Tibial artery (tissue), 4 donors: ENCODE measurements at regions of chr5 and their contacts with region 1.

Region 1: DNA sequence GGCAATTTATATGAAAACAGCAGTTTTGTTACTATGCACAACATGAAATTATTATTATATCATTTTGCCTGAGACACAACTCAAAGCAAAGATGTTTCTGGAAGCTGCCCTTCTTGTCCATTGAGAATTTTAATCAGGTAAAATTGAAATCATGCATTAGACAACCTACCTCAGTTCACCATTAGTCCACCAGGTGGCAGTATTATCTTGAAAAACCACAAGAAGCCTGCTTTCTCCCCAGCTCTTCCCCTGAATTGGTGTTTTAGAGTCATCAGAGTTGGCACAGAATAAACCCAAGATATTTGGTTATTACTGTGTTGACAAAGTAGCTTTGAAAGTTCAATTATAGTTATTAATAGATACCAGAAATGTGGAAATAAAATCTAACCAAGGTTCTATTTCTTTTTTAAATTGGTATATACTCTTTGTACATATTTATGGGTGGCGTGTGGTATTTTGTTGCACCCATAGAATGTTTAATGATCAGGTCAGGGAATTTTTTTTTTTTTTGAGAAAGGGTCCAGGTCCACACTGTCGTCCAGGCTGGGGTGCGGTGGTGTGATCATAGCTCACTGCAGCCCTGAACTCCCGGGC is 25.7 kb downstream of the UTP15 start:
- DNase-seq: no peak
- H3K4me3 ChIP-seq: no peak overlapping the region
- H3K27ac ChIP-seq: no peak overlapping the region
- H3K4me1 ChIP-seq: no peaks in the 10 kb centered on the region
- H3K27me3 ChIP-seq: no peaks in the 10 kb centered on the region
- CTCF ChIP-seq: peak; percentile 82 to 92

Region 2: DNA sequence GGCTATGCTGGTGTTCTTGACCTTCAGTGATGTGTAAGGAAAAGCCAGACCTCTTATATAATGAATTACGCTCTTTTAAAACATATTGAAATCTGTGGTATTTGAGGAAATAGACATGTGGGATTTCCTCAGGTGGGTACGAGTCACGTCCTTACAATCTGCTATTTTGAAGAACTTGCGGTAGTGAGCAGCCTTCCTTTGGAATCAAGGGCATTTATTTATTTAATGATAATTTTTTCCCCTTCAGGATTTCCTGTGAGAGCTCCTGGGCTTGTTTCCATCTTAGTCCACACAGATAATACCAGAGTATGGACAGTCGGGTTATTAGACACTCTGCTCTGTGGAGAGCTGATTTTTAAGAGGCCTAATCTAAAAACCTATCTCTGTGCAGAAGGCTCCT is 202.7 kb after region 1 on chr5:
- intact Hi-C with region 1: loop called (anchors 2 kb)
- DNase-seq: no peak
- H3K4me3 ChIP-seq: no peak overlapping the region
- H3K27ac ChIP-seq: no peak overlapping the region
- H3K4me1 ChIP-seq: no peaks in the 10 kb centered on the region
- H3K27me3 ChIP-seq: no peaks in the 10 kb centered on the region
- CTCF ChIP-seq: no peak